ENCODE measurements at regions of chr12 and their contacts with region 1.

Region 1: GRCh38 chr12:11202811-11203210 is 16.1 kb upstream of the TAS2R42 start:
- DNase-seq: no peak
- H3K4me3 Mint-ChIP-seq: no peak overlapping the region
- H3K27ac Mint-ChIP-seq: no peak overlapping the region
- H3K4me1 Mint-ChIP-seq: no peaks in the 10 kb centered on the region
- H3K27me3 Mint-ChIP-seq: no peaks in the 10 kb centered on the region
- CTCF ChIP-seq: no peak

Region 2: GRCh38 chr12:10771132-10771733 is 431.6 kb before region 1 on chr12:
- CTCF ChIA-PET with region 1: interaction called, 38 read pairs
- intact Hi-C with region 1: loop called (anchors 1 kb)
- DNase-seq: no peak
- H3K4me3 Mint-ChIP-seq: no peak overlapping the region
- H3K27ac Mint-ChIP-seq: no peak overlapping the region
- H3K4me1 Mint-ChIP-seq: no peaks in the 10 kb centered on the region
- H3K27me3 Mint-ChIP-seq: peaks cover 76% of the 10 kb centered on the region
- CTCF ChIP-seq: peak; percentile 27

Region 3: DNA sequence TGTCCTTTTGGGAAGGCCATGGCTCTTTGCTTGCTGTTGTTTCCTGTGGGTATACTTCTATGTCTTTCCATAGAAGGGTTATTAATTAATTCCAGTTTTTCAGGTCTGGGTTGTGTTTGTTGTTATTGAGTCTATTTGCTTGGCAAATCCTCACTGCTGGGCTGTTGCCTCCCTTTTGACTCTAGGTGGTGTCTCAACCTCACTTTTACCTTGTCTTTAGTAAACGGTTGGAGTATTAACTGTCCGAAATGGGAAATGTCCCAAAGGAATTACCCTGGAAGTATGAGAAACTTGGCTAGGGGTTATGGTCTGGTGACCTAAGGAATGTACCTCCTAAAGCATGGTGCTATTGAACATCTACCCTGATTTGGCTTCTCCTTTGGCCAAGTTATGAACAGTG is 335.4 kb before region 1 on chr12:
- CTCF ChIA-PET with region 1: no interaction called
- intact Hi-C with region 1: loop called (anchors 2 kb)
- DNase-seq: no peak
- H3K4me3 Mint-ChIP-seq: no peak overlapping the region
- H3K27ac Mint-ChIP-seq: no peak overlapping the region
- H3K4me1 Mint-ChIP-seq: no peaks in the 10 kb centered on the region
- H3K27me3 Mint-ChIP-seq: no peaks in the 10 kb centered on the region
- CTCF ChIP-seq: no peak

Region 4: DNA sequence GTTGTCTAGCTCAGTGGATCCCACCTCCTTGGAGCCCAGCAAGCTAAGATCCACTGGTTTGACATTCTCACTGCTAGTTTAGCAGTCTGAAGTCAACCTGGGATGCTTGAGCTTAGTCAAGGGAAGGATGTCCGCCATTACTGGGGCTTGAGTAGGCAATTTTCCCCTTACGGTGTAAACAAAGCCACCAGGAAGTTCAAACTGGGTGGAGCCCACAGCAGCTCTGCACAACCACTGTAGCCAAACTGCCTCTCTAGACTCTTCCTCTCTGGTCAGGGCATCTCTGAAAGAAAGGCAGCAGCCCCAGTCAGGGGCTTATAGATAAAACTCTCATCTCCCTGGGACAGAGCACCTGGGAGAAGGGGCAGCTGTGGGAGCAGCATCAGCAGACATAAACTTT is 93.9 kb before region 1 on chr12:
- CTCF ChIA-PET with region 1: no interaction called
- intact Hi-C with region 1: no loop called
- DNase-seq: no peak
- H3K4me3 Mint-ChIP-seq: no peak overlapping the region
- H3K27ac Mint-ChIP-seq: no peak overlapping the region
- H3K4me1 Mint-ChIP-seq: peaks cover 14% of the 10 kb centered on the region
- H3K27me3 Mint-ChIP-seq: no peaks in the 10 kb centered on the region
- CTCF ChIP-seq: no peak

Region 5: DNA sequence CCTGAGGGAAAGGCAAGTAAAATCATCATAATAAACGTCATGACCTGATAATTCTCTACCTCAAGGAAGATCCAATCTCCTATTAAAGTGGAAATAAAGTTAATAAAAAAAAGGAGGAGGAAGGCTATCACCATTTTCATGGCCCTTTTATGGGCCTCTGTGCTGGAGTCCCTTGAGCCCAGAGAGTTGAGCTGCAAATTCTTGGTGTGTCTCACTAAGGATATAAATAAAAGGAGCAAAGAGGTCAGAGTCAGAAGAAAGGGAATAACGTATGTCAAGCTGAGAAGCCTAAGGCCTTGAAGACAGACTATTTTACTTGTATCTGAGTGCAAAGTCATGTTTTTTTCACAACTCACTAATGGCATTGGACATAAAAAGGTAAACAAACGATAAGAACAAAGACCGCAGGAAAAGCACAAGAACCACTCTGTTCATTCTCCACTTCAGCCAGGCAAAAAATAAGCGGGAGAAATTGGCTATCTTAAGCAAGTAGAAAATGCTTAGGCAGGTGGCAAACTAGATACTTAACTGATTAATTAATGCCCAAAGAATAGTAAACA is 43.8 kb before region 1 on chr12:
- CTCF ChIA-PET with region 1: no interaction called
- intact Hi-C with region 1: no loop called
- DNase-seq: no peak
- H3K4me3 Mint-ChIP-seq: no peak overlapping the region
- H3K27ac Mint-ChIP-seq: no peak overlapping the region
- H3K4me1 Mint-ChIP-seq: no peaks in the 10 kb centered on the region
- H3K27me3 Mint-ChIP-seq: no peaks in the 10 kb centered on the region
- CTCF ChIP-seq: no peak

Region 6: GRCh38 chr12:11171145-11171968 is 31.5 kb before region 1 on chr12 and contains the start of gene SMIM10L1:
- CTCF ChIA-PET with region 1: interaction called, 13 read pairs
- intact Hi-C with region 1: no loop called
- DNase-seq: peak; percentile 92
- H3K4me3 Mint-ChIP-seq: peak within 1 kb of the TSS; percentile 97
- H3K27ac Mint-ChIP-seq: peak within 1 kb of the TSS; percentile 99
- H3K4me1 Mint-ChIP-seq: peaks cover 58% of the 10 kb centered on the region
- H3K27me3 Mint-ChIP-seq: no peaks in the 10 kb centered on the region
- CTCF ChIP-seq: no peak
- total RNA-seq, gene SMIM10L1: 9.7 and 11.0 TPM in 2 replicates

Region 7: GRCh38 chr12:11307143-11307542 is 104.3 kb after region 1 on chr12:
- CTCF ChIA-PET with region 1: no interaction called
- intact Hi-C with region 1: no loop called
- DNase-seq: no peak
- H3K4me3 Mint-ChIP-seq: no peak overlapping the region
- H3K27ac Mint-ChIP-seq: no peak overlapping the region
- H3K4me1 Mint-ChIP-seq: no peaks in the 10 kb centered on the region
- H3K27me3 Mint-ChIP-seq: peaks cover 66% of the 10 kb centered on the region
- CTCF ChIP-seq: no peak

Region 8: DNA sequence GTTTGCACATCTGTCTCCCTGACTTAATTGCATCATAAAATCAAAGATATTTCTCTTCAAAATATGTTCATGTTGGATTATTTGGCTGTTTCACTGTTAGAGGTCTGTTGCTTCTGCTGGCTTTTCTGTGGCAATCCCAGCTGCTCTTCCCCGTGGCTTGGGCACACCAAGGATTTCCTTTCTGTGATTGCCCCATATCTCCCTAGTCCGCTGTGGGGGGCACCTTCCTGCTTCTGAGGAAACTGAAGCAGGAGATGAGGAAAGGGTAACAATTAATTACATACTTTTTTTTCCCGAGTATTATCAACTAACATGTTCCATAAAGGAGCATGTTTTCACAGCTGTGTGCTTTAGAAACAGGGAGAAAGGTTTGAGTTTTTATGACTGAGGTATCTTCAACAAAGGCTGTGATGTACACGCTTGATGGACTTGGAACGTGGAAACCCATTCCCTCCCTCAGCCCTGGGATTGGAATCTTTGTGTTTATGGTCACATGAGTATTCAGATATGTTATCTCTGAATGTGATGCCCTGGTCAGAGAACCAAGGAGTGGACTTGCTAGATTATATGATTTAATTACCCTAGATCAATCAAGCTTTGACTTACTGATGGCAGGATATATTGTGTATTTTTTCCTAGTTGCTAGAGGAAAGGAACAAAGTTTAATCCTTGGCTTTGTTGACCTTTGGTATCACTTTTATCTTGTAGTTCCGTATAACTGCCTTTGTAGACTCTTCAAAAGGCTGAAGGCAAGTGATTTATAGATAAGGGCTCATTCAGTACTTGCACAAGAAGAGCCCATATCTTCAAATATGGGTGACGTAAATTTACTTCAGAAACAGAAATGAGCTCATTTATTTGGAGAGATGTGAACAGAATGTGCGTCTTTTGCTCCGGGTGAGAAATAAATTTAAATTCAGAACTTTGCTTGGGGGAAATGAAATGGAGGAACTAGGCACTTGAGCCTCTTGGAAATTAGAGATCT is 1200.7 kb after region 1 on chr12:
- CTCF ChIA-PET with region 1: no interaction called
- intact Hi-C with region 1: loop called (anchors 10 kb)
- DNase-seq: no peak
- H3K4me3 Mint-ChIP-seq: no peak overlapping the region
- H3K27ac Mint-ChIP-seq: no peak overlapping the region
- H3K4me1 Mint-ChIP-seq: peaks cover 44% of the 10 kb centered on the region
- H3K27me3 Mint-ChIP-seq: no peaks in the 10 kb centered on the region
- CTCF ChIP-seq: no peak

Measured in Calu3 (cell line).